ENCODE measurements at regions of chr19 and their contacts with region 1.

Region 1: GRCh38 chr19:18203863-18204393 is at the start of gene RAB3A:
- DNase-seq: peak; percentile 100
- H3K4me3 Mint-ChIP-seq: peak within 1 kb of the TSS; percentile 94
- H3K27ac Mint-ChIP-seq: peak within 1 kb of the TSS; percentile 68
- H3K4me1 Mint-ChIP-seq: peaks cover 22% of the 10 kb centered on the region
- H3K27me3 Mint-ChIP-seq: peaks cover 5% of the 10 kb centered on the region
- total RNA-seq, gene RAB3A: 3.8 to 6.0 TPM

Region 2: DNA sequence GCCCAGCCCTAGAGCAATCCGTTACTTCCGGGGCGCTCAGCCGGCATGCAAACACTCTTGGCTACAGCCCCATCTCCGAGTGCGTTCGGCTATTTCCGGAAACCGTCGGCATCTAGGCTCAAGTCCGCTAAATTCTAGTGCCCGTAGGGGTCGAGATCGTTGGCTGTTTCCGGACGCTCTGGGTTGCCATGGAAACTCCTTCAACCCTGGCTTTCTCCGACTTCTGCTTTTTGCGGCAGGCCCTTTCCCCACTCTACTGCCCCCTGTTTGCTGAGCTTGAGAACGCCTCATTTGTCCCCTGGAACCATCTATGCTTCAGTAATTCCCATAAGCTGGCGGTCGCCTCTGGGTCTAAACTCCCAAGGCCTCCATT is 51.5 kb before region 1 on chr19:
- CTCF ChIA-PET with region 1: no interaction called
- intact Hi-C with region 1: loop called (anchors 1 kb)
- DNase-seq: peak; percentile 100
- H3K4me3 Mint-ChIP-seq: peak overlapping the region; percentile 79
- H3K27ac Mint-ChIP-seq: peak overlapping the region; percentile 93
- H3K4me1 Mint-ChIP-seq: peaks cover 22% of the 10 kb centered on the region
- H3K27me3 Mint-ChIP-seq: no peaks in the 10 kb centered on the region

Region 3: GRCh38 chr19:18224525-18225354 is 20.8 kb after region 1 on chr19:
- CTCF ChIA-PET with region 1: interaction called, 4 read pairs
- intact Hi-C with region 1: loop called (anchors 1 kb)
- DNase-seq: peak; percentile 97
- H3K4me3 Mint-ChIP-seq: peak overlapping the region; percentile 76
- H3K27ac Mint-ChIP-seq: no peak overlapping the region
- H3K4me1 Mint-ChIP-seq: peaks cover 27% of the 10 kb centered on the region
- H3K27me3 Mint-ChIP-seq: peaks cover 58% of the 10 kb centered on the region

Region 4: DNA sequence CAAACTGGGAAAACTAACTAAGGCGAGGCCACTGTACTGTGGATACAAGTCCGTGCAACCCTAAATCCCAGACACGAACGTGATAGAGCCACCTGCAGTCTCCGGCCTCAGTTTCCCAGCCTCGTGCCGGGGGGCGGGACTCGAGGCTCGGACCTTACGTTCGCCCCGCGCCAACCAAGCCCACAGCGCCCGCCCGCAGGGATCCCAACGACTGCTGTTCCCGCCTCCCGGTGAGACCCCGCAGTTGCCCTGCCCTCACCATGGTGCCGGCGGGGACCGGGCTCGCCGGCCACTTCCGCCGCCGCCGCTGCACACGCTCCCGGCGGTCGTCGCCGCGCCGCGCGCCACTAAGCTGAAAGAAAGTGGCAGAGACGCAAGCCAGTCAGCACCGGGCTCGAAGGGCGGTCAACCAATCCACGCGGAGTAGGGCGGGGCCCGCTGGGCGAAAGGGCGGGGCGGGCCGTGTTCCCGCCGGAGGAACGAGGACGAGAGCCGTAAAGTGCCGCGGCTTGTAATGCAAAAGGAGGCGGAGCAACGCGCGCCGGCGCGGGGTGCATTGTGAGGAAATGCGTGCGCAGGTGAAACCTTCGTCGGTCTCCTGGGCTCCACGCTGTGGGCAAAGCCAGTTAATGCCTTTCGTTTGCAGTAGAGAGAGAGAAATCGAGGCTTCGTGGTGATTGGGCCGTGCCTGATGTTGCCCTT is 119.0 kb after region 1 on chr19 and contains the start of gene LSM4:
- CTCF ChIA-PET with region 1: no interaction called
- intact Hi-C with region 1: loop called (anchors 1 kb)
- DNase-seq: peak; percentile 100
- H3K4me3 Mint-ChIP-seq: peak within 1 kb of the TSS; percentile 93
- H3K27ac Mint-ChIP-seq: peak within 1 kb of the TSS; percentile 98
- H3K4me1 Mint-ChIP-seq: peaks cover 51% of the 10 kb centered on the region
- H3K27me3 Mint-ChIP-seq: no peaks in the 10 kb centered on the region
- total RNA-seq, gene LSM4: 439 to 451 TPM

Region 5: GRCh38 chr19:18419195-18419698 is 215.3 kb after region 1 on chr19 and contains the start of gene SSBP4:
- CTCF ChIA-PET with region 1: interaction called, 3 read pairs
- intact Hi-C with region 1: loop called (anchors 2 kb)
- DNase-seq: peak; percentile 64
- H3K4me3 Mint-ChIP-seq: peak within 1 kb of the TSS; percentile 82
- H3K27ac Mint-ChIP-seq: peak within 1 kb of the TSS; percentile 56
- H3K4me1 Mint-ChIP-seq: peaks cover 73% of the 10 kb centered on the region
- H3K27me3 Mint-ChIP-seq: peaks cover 32% of the 10 kb centered on the region
- total RNA-seq, gene SSBP4: 62.6 to 71.4 TPM

Region 6: DNA sequence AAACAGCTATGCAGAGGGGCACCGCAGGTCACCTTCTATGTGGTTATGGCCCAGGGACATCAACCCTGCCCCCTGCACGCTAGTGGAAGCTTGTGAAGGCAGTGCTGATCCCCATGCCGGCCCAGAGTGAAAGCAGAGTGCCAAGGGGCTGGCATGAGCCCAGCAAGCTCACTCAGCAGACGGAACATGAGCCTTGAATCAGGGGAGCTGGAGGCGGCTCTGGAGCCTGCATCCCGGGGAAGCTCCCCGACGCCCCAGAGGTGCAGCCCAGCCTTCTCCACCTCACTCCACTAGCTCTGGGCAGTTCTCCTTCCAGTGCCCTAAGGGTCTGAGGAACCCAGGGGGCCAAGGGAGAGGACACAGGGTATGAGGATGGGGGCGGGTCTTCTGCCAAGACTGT is 253.0 kb after region 1 on chr19:
- CTCF ChIA-PET with region 1: no interaction called
- intact Hi-C with region 1: no loop called
- DNase-seq: no peak
- H3K4me3 Mint-ChIP-seq: no peak overlapping the region
- H3K27ac Mint-ChIP-seq: no peak overlapping the region
- H3K4me1 Mint-ChIP-seq: no peaks in the 10 kb centered on the region
- H3K27me3 Mint-ChIP-seq: no peaks in the 10 kb centered on the region

Measured in activated naive CD4-positive, alpha-beta T cell treated with anti-CD3 and anti-CD28 coated beads for 36 hours (primary cell).